Mammary epithelial cell (primary cell): ENCODE measurements at regions of chr9 and their contacts with region 1.

Region 1: DNA sequence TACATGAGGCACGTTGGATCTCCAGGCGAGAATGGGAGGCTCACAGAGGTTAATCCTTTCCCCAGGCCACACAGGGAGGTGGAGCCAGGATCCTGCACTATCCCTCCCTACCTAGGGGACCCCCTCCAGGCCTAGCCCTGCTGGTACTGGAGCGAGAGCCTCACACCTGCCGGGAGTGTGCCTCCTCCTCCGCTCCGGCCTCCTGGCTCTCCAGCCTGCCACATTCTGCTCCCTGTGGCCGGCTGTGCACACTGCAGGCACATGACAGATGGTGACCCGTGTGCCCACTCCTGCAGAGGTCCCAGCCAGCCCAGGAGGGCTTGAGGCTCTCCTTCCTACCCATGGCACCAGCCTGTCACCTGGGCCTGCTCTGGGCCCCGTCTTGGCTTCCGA is 93.4 kb downstream of the RXRA start:
- DNase-seq: no peak
- H3K4me3 ChIP-seq: no peak overlapping the region
- H3K27ac ChIP-seq: no peak overlapping the region
- H3K4me1 ChIP-seq: no peaks in the 10 kb centered on the region
- H3K27me3 ChIP-seq: no peaks in the 10 kb centered on the region
- CTCF ChIP-seq: peak; percentile 31 to 33

Region 2: DNA sequence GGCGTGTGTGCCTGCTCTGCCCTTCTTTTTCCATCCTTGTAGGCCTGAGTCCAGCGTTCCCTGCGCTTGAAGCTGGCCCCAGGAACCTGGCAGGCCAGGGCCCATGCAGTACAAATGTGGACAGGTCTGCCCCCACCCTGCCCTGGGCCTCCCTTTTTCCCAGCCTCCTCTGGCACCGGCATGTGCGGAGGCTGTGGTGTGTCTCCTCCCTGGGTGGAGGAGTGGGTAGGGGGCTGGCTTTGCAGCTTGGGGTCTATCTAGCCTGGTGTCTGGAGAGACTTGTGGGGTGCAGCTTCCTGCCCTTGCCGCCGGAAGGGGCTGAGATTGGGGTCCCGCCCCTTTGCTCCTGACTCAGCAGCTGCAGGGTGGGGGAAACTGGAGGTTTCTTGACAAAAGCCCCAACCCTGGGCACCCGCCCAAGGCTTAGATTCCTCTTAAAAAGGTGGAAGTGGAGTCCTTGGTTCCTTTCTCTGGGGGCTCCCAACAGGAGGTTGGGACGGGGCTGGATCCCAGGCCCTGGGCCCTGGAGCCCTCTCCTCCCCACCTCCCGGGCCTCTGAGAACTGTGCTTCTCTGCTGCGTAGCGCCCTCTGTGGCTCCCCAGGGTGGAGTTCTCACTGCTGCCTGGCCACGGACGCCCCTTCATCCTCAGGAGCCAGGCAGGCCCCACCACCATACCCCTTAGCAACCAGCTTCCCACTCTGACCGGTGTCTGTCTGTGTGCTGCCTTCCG is 75.4 kb before region 1 on chr9:
- CTCF ChIA-PET with region 1: no interaction called
- dilution Hi-C with region 1: no loop called
- in situ Hi-C with region 1: no loop called
- intact Hi-C with region 1: no loop called
- DNase-seq: no peak
- H3K4me3 ChIP-seq: no peak overlapping the region
- H3K27ac ChIP-seq: no peak overlapping the region
- H3K4me1 ChIP-seq: peaks cover 1% of the 10 kb centered on the region
- H3K27me3 ChIP-seq: no peaks in the 10 kb centered on the region
- CTCF ChIP-seq: no peak

Region 3: DNA sequence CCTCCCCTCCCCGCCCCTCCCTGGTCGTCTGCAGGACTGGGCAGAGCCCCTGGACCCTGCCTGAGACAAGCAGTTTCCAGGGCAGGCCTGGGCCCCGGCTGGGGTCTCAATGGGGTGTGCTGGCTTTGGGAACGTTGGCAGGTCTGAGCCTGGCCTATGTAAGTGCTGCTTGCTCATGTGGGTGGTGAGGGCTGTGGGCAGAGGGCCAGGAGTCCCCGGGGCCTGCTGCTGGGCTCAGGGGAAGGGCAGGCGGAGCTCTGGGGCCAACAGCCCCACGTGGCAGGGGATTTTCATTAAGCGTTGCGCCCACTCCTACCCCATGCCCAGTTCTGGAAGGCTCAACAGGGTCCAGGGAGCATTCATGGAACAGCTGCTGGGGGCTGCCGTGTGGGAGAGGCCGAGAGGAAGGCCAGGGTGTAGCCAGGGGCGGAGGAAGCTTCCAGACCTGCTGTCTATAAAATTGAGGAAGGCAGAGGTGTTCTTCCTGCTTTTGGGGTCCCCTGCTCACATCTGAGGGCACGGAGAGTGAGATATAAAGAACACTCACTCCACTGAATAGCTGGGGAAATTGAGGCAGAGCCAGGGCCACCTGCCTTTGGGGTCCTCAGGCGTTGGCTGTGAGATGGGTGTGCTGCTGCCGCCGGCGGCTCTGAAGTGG is 60.9 kb before region 1 on chr9:
- CTCF ChIA-PET with region 1: no interaction called
- dilution Hi-C with region 1: loop called (anchors 5 kb)
- in situ Hi-C with region 1: no loop called
- intact Hi-C with region 1: no loop called
- DNase-seq: peak; percentile 66
- H3K4me3 ChIP-seq: no peak overlapping the region
- H3K27ac ChIP-seq: no peak overlapping the region
- H3K4me1 ChIP-seq: peaks cover 75% of the 10 kb centered on the region
- H3K27me3 ChIP-seq: no peaks in the 10 kb centered on the region
- CTCF ChIP-seq: no peak

Region 4: GRCh38 chr9:134475011-134475790 is 55.5 kb after region 1 on chr9:
- CTCF ChIA-PET with region 1: no interaction called
- dilution Hi-C with region 1: no loop called
- in situ Hi-C with region 1: no loop called
- intact Hi-C with region 1: no loop called
- DNase-seq: no peak
- H3K4me3 ChIP-seq: no peak overlapping the region
- H3K27ac ChIP-seq: no peak overlapping the region
- H3K4me1 ChIP-seq: no peaks in the 10 kb centered on the region
- H3K27me3 ChIP-seq: no peaks in the 10 kb centered on the region
- CTCF ChIP-seq: no peak

Region 5: DNA sequence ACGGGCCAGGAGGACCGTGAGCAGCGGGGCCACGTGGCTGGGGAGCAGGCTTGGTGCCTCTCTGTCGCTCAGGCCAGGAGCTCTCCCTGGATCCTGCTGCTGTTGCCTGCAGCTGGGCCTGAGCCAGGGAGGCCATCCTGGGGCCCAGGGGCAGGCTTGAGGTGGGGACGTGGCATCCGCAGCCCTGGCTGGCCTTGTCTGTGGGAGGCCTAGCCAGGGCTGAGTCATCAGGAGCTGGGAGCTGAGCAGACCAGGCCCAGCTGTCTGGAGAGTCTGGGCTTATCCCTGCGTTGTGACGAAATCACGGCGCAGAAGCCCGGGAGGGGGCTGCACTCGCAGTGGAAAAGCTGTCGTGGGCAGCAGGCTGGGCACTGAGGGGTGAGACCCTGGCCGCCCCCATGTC is 83.1 kb after region 1 on chr9:
- CTCF ChIA-PET with region 1: no interaction called
- dilution Hi-C with region 1: no loop called
- in situ Hi-C with region 1: no loop called
- intact Hi-C with region 1: no loop called
- DNase-seq: peak; percentile 64
- H3K4me3 ChIP-seq: no peak overlapping the region
- H3K27ac ChIP-seq: no peak overlapping the region
- H3K4me1 ChIP-seq: no peaks in the 10 kb centered on the region
- H3K27me3 ChIP-seq: peaks cover 7% of the 10 kb centered on the region
- CTCF ChIP-seq: no peak